Activated CD4-positive, alpha-beta T cell treated with anti-CD3 and anti-CD28 coated beads for 36 hours (primary cell): ENCODE measurements at regions of chr6 and their contacts with region 1.

Region 1: GRCh38 chr6:160534050-160534696 is 129.9 kb downstream of the LPA start:
- DNase-seq: peak; percentile 71
- ATAC-seq: peak; percentile 76
- H3K4me3 Mint-ChIP-seq: no peak overlapping the region
- H3K27ac Mint-ChIP-seq: no peak overlapping the region
- H3K4me1 Mint-ChIP-seq: no peaks in the 10 kb centered on the region
- H3K27me3 Mint-ChIP-seq: peaks cover 2% of the 10 kb centered on the region

Region 2: GRCh38 chr6:160137989-160138835 is 396.0 kb before region 1 on chr6:
- CTCF ChIA-PET with region 1: no interaction called
- POLR2A ChIA-PET with region 1: no interaction called
- intact Hi-C with region 1: loop called (anchors 1 to 5 kb)
- DNase-seq: peak; percentile 86
- ATAC-seq: peak; percentile 69
- H3K4me3 Mint-ChIP-seq: no peak overlapping the region
- H3K27ac Mint-ChIP-seq: peak overlapping the region; percentile 26
- H3K4me1 Mint-ChIP-seq: peaks cover 15% of the 10 kb centered on the region
- H3K27me3 Mint-ChIP-seq: no peaks in the 10 kb centered on the region